B cell (primary cell): ENCODE measurements at regions of chr9 and their contacts with region 1.

Region 1: GRCh38 chr9:134391314-134392231 is 65.3 kb downstream of the RXRA start:
- DNase-seq: peak; percentile 86
- ATAC-seq: peak; percentile 36
- H3K4me3 ChIP-seq: peak overlapping the region in 3 of 5 experiments; percentile 23 to 38 (median 25)
- H3K4me3 Mint-ChIP-seq: peak overlapping the region; percentile 87
- H3K27ac ChIP-seq: peak overlapping the region; percentile 70 to 90
- H3K27ac Mint-ChIP-seq: peak overlapping the region; percentile 95
- H3K4me1 ChIP-seq: peaks cover 59 to 65% of the 10 kb centered on the region in 2 donors
- H3K4me1 Mint-ChIP-seq: peaks cover 59% of the 10 kb centered on the region
- H3K27me3 ChIP-seq: no peaks in the 10 kb centered on the region
- H3K27me3 Mint-ChIP-seq: no peaks in the 10 kb centered on the region
- CTCF ChIP-seq: no peak

Region 2: DNA sequence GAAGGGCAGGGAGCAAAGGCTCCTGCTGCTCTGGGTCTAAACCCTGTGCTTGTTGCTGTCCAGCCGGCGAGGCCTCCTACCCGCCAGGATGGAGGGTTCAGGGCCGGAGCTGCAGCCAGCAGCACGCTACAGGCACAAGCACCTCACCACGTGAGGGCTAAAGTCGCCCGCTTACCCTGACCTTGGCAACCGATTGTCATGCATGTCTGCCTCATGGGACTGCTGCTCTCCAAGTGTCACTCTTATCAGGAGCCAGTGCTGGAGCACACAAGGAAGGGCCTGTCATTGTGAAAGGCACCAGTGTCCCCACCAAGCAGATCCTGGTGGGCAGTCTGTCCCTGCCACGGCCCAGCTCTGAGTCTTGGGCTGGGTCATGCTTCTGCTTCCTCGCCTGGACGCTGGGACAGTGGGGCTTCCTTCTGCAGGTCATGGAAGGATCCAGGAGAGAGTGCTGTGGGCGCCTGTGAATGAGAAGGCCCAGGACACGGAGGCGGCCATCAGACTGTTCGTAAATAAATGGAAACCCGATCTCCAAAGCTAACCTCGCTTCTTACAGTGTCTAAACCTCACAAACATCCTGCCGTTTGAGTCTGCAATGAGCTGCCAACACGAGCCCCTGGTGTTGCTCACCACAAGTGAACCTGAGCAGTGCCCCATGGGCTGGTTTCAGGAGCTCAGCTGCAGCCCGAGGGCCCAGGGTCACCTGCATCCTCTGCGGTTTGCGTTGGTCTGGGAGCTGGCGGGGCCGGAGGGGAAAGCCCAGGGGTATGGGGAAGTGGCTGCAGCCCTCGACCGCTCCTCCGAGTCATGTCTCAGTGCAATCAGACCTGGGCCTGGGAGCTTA is 123.5 kb before region 1 on chr9:
- CTCF ChIA-PET with region 1: no interaction called
- POLR2A ChIA-PET with region 1: no interaction called
- intact Hi-C with region 1: loop called (anchors 5 kb)
- DNase-seq: peak; percentile 70
- ATAC-seq: peak; percentile 82
- H3K4me3 ChIP-seq: peak overlapping the region in 2 of 5 experiments; percentile 1 to 10
- H3K4me3 Mint-ChIP-seq: peak overlapping the region; percentile 67
- H3K27ac ChIP-seq: peak overlapping the region in 1 of 2 donors; percentile 32
- H3K27ac Mint-ChIP-seq: peak overlapping the region; percentile 73
- H3K4me1 ChIP-seq: peaks cover 48 to 55% of the 10 kb centered on the region in 2 donors
- H3K4me1 Mint-ChIP-seq: peaks cover 46% of the 10 kb centered on the region
- H3K27me3 ChIP-seq: peaks cover 0 to 14% (median 3%) of the 10 kb centered on the region in 4 experiments
- H3K27me3 Mint-ChIP-seq: peaks cover 19% of the 10 kb centered on the region
- CTCF ChIP-seq: no peak

Region 3: DNA sequence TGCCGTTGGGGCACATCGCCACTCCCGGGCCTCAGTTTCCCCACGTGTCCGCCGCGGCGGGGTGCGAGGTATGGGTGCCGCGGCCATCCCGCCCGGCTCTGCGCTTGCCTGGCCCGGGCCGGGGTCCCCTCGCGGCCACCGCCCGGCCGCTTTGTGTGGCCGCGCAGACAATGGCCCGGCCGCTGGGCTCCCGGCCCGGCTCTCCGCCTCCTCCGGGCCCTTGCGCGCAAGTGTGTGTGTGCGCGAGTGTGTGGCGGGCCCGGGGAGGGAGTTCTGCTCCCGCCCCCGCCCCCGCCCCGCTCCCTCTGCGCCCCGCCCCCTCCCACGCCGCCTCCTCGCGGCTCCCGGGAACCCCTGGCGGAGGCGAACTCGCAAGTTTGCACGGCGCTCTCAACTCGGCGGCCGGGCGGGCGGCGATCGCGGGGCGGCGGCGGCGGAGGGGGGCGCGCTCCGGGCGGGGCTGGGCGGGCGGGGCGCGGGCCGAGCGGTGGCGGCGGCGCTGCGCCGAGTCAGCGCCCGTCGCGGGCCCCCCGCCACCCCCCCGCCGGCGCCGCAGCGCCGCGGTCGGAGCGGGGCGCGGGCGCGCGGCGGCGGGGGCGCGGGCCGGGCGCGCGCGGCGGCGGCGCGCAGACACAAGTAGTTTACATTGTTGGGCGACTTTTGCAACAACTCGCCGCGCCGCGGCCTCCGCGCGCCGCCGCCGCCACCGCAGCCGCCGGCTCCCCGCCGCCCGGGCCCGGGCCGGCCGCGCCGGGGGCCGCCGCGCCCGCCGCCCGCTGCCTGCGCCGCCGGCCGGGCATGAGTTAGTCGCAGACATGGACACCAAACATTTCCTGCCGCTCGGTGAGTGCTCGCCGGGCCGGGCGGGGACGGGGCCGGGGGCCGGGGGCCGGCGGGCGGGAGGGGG is 65.5 kb before region 1 on chr9 and contains the start of gene RXRA:
- CTCF ChIA-PET with region 1: no interaction called
- POLR2A ChIA-PET with region 1: no interaction called
- intact Hi-C with region 1: loop called (anchors 5 kb)
- DNase-seq: peak; percentile 83
- ATAC-seq: peak; percentile 77
- H3K4me3 ChIP-seq: peak within 1 kb of the TSS; percentile 17 to 85 (median 78)
- H3K4me3 Mint-ChIP-seq: peak within 1 kb of the TSS; percentile 82
- H3K27ac ChIP-seq: no peak within 1 kb of the TSS
- H3K27ac Mint-ChIP-seq: peak within 1 kb of the TSS; percentile 68
- H3K4me1 ChIP-seq: peaks cover 11 to 20% of the 10 kb centered on the region in 2 donors
- H3K4me1 Mint-ChIP-seq: peaks cover 17% of the 10 kb centered on the region
- H3K27me3 ChIP-seq: peaks cover 0 to 13% (median 3%) of the 10 kb centered on the region in 4 experiments
- H3K27me3 Mint-ChIP-seq: no peaks in the 10 kb centered on the region
- CTCF ChIP-seq: no peak
- total RNA-seq, gene RXRA: 6.7 and 6.8 TPM in 2 replicates

Region 4: DNA sequence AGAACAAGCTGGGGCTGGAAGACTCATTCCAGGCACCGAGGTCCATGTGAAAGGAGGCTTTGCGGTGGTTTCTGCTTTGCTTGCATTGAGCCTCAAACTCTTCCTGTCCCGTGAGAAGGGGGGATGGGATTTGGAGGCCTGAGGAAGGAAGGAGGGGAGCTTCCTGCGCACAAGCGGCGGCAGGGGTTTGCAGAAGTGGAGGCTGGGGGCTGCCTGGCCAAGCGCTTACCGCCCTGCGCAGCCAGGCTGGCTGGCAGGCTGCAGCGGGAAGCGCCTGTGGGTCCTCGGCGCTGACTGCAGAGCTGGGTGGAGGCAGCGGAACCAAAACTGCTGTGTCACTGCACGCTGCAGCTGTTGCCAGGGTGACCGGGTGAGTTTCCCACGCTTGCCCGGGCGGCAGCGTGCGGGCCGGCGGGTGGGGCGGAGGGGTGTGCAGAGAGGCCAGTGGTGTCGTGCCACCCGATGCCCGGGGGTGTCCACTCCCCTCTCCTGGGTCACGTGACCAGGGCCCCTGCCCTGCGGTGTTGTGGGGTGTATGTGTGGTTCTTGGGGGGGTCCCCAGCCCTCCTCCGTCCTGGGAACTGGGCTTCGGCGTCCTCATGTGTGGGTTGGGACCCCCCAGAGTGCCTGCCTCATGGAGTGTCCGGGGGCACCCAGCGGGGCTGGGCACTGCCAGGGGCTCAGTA is 15.7 kb after region 1 on chr9:
- CTCF ChIA-PET with region 1: interaction called, 5 read pairs
- POLR2A ChIA-PET with region 1: interaction called, 3 read pairs
- intact Hi-C with region 1: loop called (anchors 1 kb)
- DNase-seq: peak; percentile 91
- ATAC-seq: peak; percentile 88
- H3K4me3 ChIP-seq: peak overlapping the region in 4 of 5 experiments; percentile 23 to 49 (median 30)
- H3K4me3 Mint-ChIP-seq: peak overlapping the region; percentile 73
- H3K27ac ChIP-seq: no peak overlapping the region
- H3K27ac Mint-ChIP-seq: peak overlapping the region; percentile 77
- H3K4me1 ChIP-seq: peaks cover 59 to 66% of the 10 kb centered on the region in 2 donors
- H3K4me1 Mint-ChIP-seq: peaks cover 46% of the 10 kb centered on the region
- H3K27me3 ChIP-seq: no peaks in the 10 kb centered on the region
- H3K27me3 Mint-ChIP-seq: no peaks in the 10 kb centered on the region
- CTCF ChIP-seq: no peak

Region 5: GRCh38 chr9:134518004-134518606 is 126.5 kb after region 1 on chr9:
- CTCF ChIA-PET with region 1: no interaction called
- POLR2A ChIA-PET with region 1: no interaction called
- intact Hi-C with region 1: no loop called
- DNase-seq: no peak
- ATAC-seq: no peak
- H3K4me3 ChIP-seq: no peak overlapping the region
- H3K4me3 Mint-ChIP-seq: no peak overlapping the region
- H3K27ac ChIP-seq: no peak overlapping the region
- H3K27ac Mint-ChIP-seq: no peak overlapping the region
- H3K4me1 ChIP-seq: no peaks in the 10 kb centered on the region
- H3K4me1 Mint-ChIP-seq: no peaks in the 10 kb centered on the region
- H3K27me3 ChIP-seq: no peaks in the 10 kb centered on the region
- H3K27me3 Mint-ChIP-seq: peaks cover 9% of the 10 kb centered on the region
- CTCF ChIP-seq: no peak